Endothelial cell of umbilical vein (primary cell): ENCODE measurements at regions of chr2 and their contacts with region 1.

Region 1: GRCh38 chr2:241102239-241102803 is at the start of gene MTERF4:
- DNase-seq: peak; percentile 78
- H3K4me3 ChIP-seq: peak within 1 kb of the TSS; percentile 70 to 99 (median 84)
- H3K27ac ChIP-seq: peak within 1 kb of the TSS; percentile 72
- H3K4me1 ChIP-seq: peaks cover 12% of the 10 kb centered on the region
- H3K27me3 ChIP-seq: no peaks in the 10 kb centered on the region
- CTCF ChIP-seq: no peak
- POLR2A ChIP-seq: peak; percentile 89
- total RNA-seq, gene MTERF4: 14.7 and 24.7 TPM in 2 replicates

Region 2: DNA sequence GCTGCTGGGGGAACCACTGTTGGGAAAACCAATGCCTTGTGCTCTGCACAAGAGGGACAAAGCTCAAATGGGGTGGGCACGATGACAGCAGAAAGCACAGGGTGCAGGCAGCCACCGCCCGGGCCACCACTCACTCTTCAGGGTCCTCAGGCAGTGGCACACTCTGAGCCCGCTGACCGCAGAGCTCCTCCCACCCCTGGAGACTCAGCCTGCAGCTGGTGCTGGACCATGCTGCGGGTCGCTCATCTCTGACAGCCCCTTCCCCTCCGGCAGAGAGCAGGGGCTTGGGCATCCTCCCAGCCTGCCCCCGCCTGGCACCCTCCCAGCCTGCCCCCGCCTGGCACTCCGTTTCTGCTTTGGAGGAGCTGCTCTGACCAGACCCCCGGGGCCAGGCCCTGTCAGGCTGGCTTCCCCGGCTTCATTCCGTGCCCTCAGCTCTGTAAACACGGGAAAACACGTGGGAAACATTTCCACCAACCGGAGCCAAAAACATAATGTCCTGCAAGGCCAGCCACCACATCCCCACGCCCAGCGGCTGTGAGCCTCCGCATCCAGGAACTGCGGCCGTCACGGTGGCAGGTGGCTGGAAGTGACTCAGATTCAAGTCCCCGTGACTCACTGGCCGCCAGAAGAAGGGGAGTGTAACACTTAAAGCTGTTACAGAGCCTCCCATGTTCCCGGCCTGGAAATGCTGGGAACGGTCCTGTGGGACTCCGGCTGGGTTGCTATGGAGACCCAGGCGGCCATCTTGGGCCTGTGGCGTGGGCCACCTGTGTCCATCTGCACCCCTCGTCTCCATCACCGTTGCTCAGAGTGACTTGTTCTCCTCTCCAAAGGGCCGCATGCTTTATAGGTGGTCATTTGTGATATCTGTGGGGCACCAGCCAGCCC is 110.7 kb before region 1 on chr2:
- CTCF ChIA-PET with region 1: no interaction called
- POLR2A ChIA-PET with region 1: no interaction called
- dilution Hi-C with region 1: no loop called
- intact Hi-C with region 1: loop called (anchors 2 kb)
- DNase-seq: peak; percentile 98
- H3K4me3 ChIP-seq: no peak overlapping the region
- H3K27ac ChIP-seq: peak overlapping the region; percentile 73
- H3K4me1 ChIP-seq: peaks cover 28% of the 10 kb centered on the region
- H3K27me3 ChIP-seq: no peaks in the 10 kb centered on the region
- CTCF ChIP-seq: no peak
- POLR2A ChIP-seq: no peak

Region 3: GRCh38 chr2:241081643-241082340 is 20.5 kb before region 1 on chr2:
- CTCF ChIA-PET with region 1: interaction called, 11 read pairs
- POLR2A ChIA-PET with region 1: no interaction called
- dilution Hi-C with region 1: no loop called
- intact Hi-C with region 1: no loop called
- DNase-seq: no peak
- H3K4me3 ChIP-seq: no peak overlapping the region
- H3K27ac ChIP-seq: no peak overlapping the region
- H3K4me1 ChIP-seq: no peaks in the 10 kb centered on the region
- H3K27me3 ChIP-seq: no peaks in the 10 kb centered on the region
- CTCF ChIP-seq: no peak
- POLR2A ChIP-seq: no peak

Region 4: GRCh38 chr2:241149925-241150659 is 47.8 kb after region 1 on chr2 and contains the start of gene PPP1R7:
- CTCF ChIA-PET with region 1: no interaction called
- POLR2A ChIA-PET with region 1: no interaction called
- dilution Hi-C with region 1: no loop called
- intact Hi-C with region 1: loop called (anchors 1 kb)
- DNase-seq: peak; percentile 95
- H3K4me3 ChIP-seq: peak within 1 kb of the TSS; percentile 76 to 85 (median 78)
- H3K27ac ChIP-seq: no peak within 1 kb of the TSS
- H3K4me1 ChIP-seq: peaks cover 15% of the 10 kb centered on the region
- H3K27me3 ChIP-seq: no peaks in the 10 kb centered on the region
- CTCF ChIP-seq: peak in 1 of 2 donors; percentile 16
- POLR2A ChIP-seq: peak; percentile 74
- total RNA-seq, gene PPP1R7: 60.8 and 68.2 TPM in 2 replicates

Region 5: DNA sequence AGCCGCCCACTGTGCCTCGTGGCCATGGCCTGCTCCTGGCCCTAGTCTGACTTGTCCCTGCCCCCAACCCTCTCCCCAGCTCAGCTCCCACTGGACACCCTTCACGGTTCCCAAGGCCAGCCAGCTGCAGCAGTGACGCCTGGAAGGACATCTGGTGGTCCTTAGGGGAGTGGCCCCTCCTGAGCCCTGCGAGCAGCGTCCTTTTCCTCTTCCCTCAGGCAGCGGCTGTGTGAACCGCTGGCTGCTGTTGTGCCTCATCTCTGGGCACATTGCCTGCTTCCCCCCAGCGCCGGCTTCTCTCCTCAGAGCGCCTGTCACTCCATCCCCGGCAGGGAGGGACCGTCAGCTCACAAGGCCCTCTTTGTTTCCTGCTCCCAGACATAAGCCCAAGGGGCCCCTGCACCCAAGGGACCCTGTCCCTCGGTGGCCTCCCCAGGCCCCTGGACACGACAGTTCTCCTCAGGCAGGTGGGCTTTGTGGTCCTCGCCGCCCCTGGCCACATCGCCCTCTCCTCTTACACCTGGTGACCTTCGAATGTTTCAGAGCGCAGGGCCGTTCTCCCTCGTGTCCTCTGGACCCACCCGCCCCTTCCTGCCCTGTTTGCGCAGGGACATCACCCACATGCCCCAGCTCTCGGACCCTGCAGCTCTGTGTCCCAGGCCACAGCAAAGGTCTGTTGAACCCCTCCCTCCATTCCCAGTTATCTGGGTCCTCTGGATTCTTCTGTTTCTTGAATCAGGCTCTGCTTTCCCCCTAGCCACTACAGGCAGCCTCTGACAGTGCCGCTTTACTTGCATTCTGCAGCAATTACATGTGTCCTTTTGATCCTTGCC is 121.9 kb after region 1 on chr2:
- CTCF ChIA-PET with region 1: no interaction called
- POLR2A ChIA-PET with region 1: no interaction called
- dilution Hi-C with region 1: no loop called
- intact Hi-C with region 1: loop called (anchors 5 kb)
- DNase-seq: peak; percentile 23
- H3K4me3 ChIP-seq: no peak overlapping the region
- H3K27ac ChIP-seq: peak overlapping the region; percentile 4
- H3K4me1 ChIP-seq: peaks cover 20% of the 10 kb centered on the region
- H3K27me3 ChIP-seq: no peaks in the 10 kb centered on the region
- CTCF ChIP-seq: peak in 1 of 2 donors; percentile 3
- POLR2A ChIP-seq: no peak